ENCODE measurements at regions of chr11 and their contacts with region 1.

Region 1: GRCh38 chr11:26247340-26247739 is 84.6 kb upstream of the ANO3 start:
- DNase-seq: no peak
- H3K4me3 Mint-ChIP-seq: no peak overlapping the region
- H3K27ac Mint-ChIP-seq: no peak overlapping the region
- H3K4me1 Mint-ChIP-seq: no peaks in the 10 kb centered on the region
- H3K27me3 Mint-ChIP-seq: no peaks in the 10 kb centered on the region

Region 2: GRCh38 chr11:26187639-26188038 is 59.7 kb before region 1 on chr11:
- CTCF ChIA-PET with region 1: no interaction called
- intact Hi-C with region 1: no loop called
- DNase-seq: no peak
- H3K4me3 Mint-ChIP-seq: no peak overlapping the region
- H3K27ac Mint-ChIP-seq: no peak overlapping the region
- H3K4me1 Mint-ChIP-seq: no peaks in the 10 kb centered on the region
- H3K27me3 Mint-ChIP-seq: no peaks in the 10 kb centered on the region

Region 3: GRCh38 chr11:26268980-26269660 is 21.8 kb after region 1 on chr11:
- CTCF ChIA-PET with region 1: interaction called, 3 read pairs
- intact Hi-C with region 1: loop called (anchors 1 kb)
- DNase-seq: no peak
- H3K4me3 Mint-ChIP-seq: no peak overlapping the region
- H3K27ac Mint-ChIP-seq: no peak overlapping the region
- H3K4me1 Mint-ChIP-seq: no peaks in the 10 kb centered on the region
- H3K27me3 Mint-ChIP-seq: peaks cover 3% of the 10 kb centered on the region

Region 4: GRCh38 chr11:26344647-26345046 is 97.3 kb after region 1 on chr11:
- CTCF ChIA-PET with region 1: no interaction called
- intact Hi-C with region 1: no loop called
- DNase-seq: no peak
- H3K4me3 Mint-ChIP-seq: no peak overlapping the region
- H3K27ac Mint-ChIP-seq: no peak overlapping the region
- H3K4me1 Mint-ChIP-seq: no peaks in the 10 kb centered on the region
- H3K27me3 Mint-ChIP-seq: no peaks in the 10 kb centered on the region